A549 (cell line): ENCODE measurements at regions of chr17 and their contacts with region 1.

Region 1: DNA sequence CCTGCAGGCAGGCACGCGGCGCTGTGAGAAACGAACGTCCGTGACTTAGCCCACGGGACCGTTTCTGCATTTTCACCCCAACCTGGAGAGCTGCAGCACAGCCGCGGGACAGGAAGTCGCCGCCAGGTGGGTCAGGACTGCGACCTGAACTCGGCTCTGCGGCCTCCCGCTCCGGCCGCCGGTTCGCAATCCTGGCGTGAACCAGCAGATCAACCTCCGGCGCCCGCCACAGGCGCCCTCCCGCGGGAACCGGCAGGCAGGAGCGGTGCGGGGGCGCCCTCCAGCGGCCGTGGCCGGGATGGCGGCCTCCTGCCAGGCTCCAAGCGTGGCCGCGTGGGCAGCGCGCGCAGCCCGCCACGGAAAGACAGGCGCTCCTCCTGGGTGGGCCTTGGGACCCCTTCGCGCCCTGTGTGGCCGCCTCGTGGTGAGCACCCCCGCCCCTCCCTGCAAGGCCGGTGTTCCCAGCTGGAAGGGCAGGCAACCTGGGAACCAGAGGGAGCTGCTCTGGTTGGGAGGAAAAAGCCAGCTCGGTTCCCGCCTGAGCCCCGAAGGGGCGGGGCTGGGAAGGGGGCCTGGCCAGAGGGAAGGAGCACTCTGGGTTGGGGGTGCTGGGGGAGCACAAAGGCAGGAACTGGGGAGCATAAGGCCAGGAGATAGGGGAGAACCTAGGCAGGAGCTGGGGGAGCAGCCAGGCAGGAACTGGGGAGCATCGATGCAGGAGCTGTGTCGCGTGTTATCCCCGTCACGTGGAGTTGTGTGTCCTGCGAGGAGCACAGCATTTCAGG is 28.2 kb downstream of the ACTG1 start:
- DNase-seq: peak; percentile 80 to 88
- ATAC-seq: peak; percentile 51 to 69
- H3K4me3 ChIP-seq: peak overlapping the region; percentile 37
- H3K27ac ChIP-seq: peak overlapping the region; percentile 86 to 89
- H3K4me1 ChIP-seq: peaks cover 39% of the 10 kb centered on the region
- CTCF ChIP-seq: peak; percentile 100
- EP300 ChIP-seq: no peak
- POLR2A ChIP-seq: 0 out of 2 replicates have a peak, but pooled peaks have one; percentile 21
- RAD21 ChIP-seq: peak; percentile 93 to 100

Region 2: GRCh38 chr17:81294856-81295680 is 189.3 kb before region 1 on chr17 and contains the start of gene SLC38A10:
- CTCF ChIA-PET with region 1: interaction called, 53 read pairs
- POLR2A ChIA-PET with region 1: interaction called, 4 read pairs
- DNase-seq: peak; percentile 87 to 100
- ATAC-seq: peak; percentile 94 to 95
- H3K4me3 ChIP-seq: peak within 1 kb of the TSS; percentile 74
- H3K27ac ChIP-seq: peak within 1 kb of the TSS; percentile 91 to 92
- H3K4me1 ChIP-seq: peaks cover 22% of the 10 kb centered on the region
- CTCF ChIP-seq: no peak; the same call in 2 of the 3 replicates
- EP300 ChIP-seq: no peak
- POLR2A ChIP-seq: peak; percentile 95
- RAD21 ChIP-seq: peak in 1 of 2 experiments; percentile 24; a peak in 1 of 5 replicates
- polyA plus RNA-seq, gene SLC38A10: 35.8 and 49.3 TPM in 2 replicates

Region 3: GRCh38 chr17:81337476-81337879 is 146.9 kb before region 1 on chr17:
- CTCF ChIA-PET with region 1: interaction called, 30 read pairs
- POLR2A ChIA-PET with region 1: no interaction called
- DNase-seq: peak; percentile 47 to 76
- ATAC-seq: peak; percentile 27 to 30; a peak in 4 of 6 replicates
- H3K4me3 ChIP-seq: no peak overlapping the region
- H3K27ac ChIP-seq: peak overlapping the region; percentile 23 to 96; a peak in 5 of 6 replicates
- H3K4me1 ChIP-seq: peaks cover 76% of the 10 kb centered on the region
- CTCF ChIP-seq: no peak
- EP300 ChIP-seq: no peak
- POLR2A ChIP-seq: no peak
- RAD21 ChIP-seq: no peak

Region 4: DNA sequence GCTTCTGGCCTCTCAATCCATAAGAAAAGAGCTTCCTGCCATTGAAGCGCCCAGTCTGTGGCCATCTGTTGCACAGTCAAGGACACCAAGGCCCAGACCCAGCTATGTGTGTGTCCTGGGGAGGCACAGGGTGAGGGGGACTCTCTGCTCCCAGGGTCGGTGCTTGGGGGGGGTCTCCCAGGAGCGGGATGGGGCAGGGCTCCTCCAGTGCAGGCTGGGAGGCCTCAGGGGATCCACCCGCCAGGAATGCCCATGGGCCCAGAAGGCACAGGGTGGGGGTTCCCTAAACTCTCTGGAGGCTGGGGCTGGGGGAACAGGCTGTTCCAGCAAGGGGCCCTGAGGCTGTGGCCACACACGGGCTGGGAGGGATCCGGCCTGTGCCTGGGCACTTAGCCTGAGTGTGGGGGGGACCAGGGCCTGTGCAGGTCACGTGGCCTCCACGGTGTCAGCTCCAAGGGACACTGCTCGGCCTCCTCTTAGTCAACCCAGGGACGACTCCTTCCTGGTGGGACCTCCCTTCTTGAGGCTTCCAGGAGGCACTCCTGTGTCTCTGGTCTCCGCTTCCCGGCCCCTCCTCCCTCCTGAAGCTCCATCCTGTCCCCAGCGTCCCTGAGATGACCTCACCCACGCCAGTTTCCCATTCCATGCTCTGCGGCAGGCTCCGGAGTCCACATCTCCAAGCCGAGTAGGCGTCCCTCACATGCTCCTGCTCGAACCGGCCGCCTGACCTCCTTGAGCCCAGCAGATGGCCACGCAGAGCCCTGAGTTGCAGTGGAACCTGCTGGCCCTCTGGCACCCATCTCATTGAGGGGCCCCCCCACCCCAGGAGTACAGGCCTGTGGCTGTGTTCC is 112.3 kb before region 1 on chr17:
- CTCF ChIA-PET with region 1: interaction called, 60 read pairs
- POLR2A ChIA-PET with region 1: no interaction called
- DNase-seq: peak; percentile 73 to 77
- ATAC-seq: peak; percentile 91 to 95
- H3K4me3 ChIP-seq: no peak overlapping the region
- H3K27ac ChIP-seq: peak overlapping the region; percentile 19 to 36; a peak in 2 of 6 replicates
- H3K4me1 ChIP-seq: peaks cover 5% of the 10 kb centered on the region
- CTCF ChIP-seq: peak; percentile 55
- EP300 ChIP-seq: no peak
- POLR2A ChIP-seq: no peak
- RAD21 ChIP-seq: peak; percentile 69 to 71; a peak in 4 of 5 replicates

Region 5: GRCh38 chr17:81401723-81402529 is 82.5 kb before region 1 on chr17:
- CTCF ChIA-PET with region 1: interaction called, 121 read pairs
- POLR2A ChIA-PET with region 1: interaction called, 5 read pairs
- DNase-seq: peak; percentile 69 to 81
- ATAC-seq: peak in 1 of 2 experiments; percentile 54; a peak in 3 of 6 replicates
- H3K4me3 ChIP-seq: no peak overlapping the region
- H3K27ac ChIP-seq: peak overlapping the region; percentile 16 to 98; a peak in 3 of 6 replicates
- H3K4me1 ChIP-seq: peaks cover 49% of the 10 kb centered on the region
- CTCF ChIP-seq: peak; percentile 55
- EP300 ChIP-seq: no peak
- POLR2A ChIP-seq: no peak
- RAD21 ChIP-seq: peak; percentile 64 to 67

Region 6: DNA sequence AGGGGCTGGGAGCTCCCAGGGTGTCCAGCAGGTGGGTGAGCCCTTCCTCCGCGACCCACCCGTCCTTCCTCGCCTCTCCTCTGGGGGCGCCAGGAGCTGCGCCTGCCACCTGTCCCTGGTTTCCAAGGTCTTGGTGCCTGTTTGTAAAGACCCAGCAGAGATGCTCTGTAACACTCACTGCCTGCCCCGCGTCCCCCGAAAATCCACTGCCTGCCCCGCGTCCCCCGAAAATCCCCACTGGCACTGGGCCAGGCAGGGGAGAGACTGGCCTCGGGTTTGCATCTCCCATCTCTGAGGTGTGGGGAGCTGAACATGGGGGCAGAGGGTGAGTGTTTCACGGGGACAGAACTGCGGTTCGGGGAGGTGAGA is 43.5 kb before region 1 on chr17:
- CTCF ChIA-PET with region 1: interaction called, 30 read pairs
- POLR2A ChIA-PET with region 1: no interaction called
- DNase-seq: peak; percentile 63 to 87
- ATAC-seq: peak; percentile 49 to 83; a peak in 5 of 6 replicates
- H3K4me3 ChIP-seq: no peak overlapping the region
- H3K27ac ChIP-seq: 0 out of 6 replicates have a peak overlapping the region, but pooled peaks of 1 of the 2 experiments have one; percentile 20
- H3K4me1 ChIP-seq: 0 out of 3 replicates have a peak, but pooled peaks cover 4% of the 10 kb centered on the region
- CTCF ChIP-seq: peak; percentile 60
- EP300 ChIP-seq: no peak
- POLR2A ChIP-seq: no peak
- RAD21 ChIP-seq: peak; percentile 56 to 69; a peak in 4 of 5 replicates

Region 7: GRCh38 chr17:81494626-81495385 is 10.4 kb after region 1 on chr17:
- CTCF ChIA-PET with region 1: interaction called, 43 read pairs
- POLR2A ChIA-PET with region 1: interaction called, 6 read pairs
- DNase-seq: peak in 1 of 2 experiments; percentile 61
- ATAC-seq: peak in 1 of 2 experiments; percentile 43; a peak in 3 of 6 replicates
- H3K4me3 ChIP-seq: no peak overlapping the region
- H3K27ac ChIP-seq: no peak overlapping the region
- H3K4me1 ChIP-seq: peaks cover 28% of the 10 kb centered on the region
- CTCF ChIP-seq: no peak
- EP300 ChIP-seq: no peak
- POLR2A ChIP-seq: no peak
- RAD21 ChIP-seq: no peak

Region 8: GRCh38 chr17:81589612-81590011 is 105.2 kb after region 1 on chr17:
- CTCF ChIA-PET with region 1: no interaction called
- POLR2A ChIA-PET with region 1: no interaction called
- DNase-seq: no peak
- ATAC-seq: no peak
- H3K4me3 ChIP-seq: no peak overlapping the region
- H3K27ac ChIP-seq: no peak overlapping the region
- H3K4me1 ChIP-seq: peaks cover 7% of the 10 kb centered on the region
- CTCF ChIP-seq: no peak
- EP300 ChIP-seq: no peak
- POLR2A ChIP-seq: no peak
- RAD21 ChIP-seq: no peak